Gastrocnemius medialis (tissue), 4 donors: ENCODE measurements at regions of chr4 and their contacts with region 1.

Region 1: DNA sequence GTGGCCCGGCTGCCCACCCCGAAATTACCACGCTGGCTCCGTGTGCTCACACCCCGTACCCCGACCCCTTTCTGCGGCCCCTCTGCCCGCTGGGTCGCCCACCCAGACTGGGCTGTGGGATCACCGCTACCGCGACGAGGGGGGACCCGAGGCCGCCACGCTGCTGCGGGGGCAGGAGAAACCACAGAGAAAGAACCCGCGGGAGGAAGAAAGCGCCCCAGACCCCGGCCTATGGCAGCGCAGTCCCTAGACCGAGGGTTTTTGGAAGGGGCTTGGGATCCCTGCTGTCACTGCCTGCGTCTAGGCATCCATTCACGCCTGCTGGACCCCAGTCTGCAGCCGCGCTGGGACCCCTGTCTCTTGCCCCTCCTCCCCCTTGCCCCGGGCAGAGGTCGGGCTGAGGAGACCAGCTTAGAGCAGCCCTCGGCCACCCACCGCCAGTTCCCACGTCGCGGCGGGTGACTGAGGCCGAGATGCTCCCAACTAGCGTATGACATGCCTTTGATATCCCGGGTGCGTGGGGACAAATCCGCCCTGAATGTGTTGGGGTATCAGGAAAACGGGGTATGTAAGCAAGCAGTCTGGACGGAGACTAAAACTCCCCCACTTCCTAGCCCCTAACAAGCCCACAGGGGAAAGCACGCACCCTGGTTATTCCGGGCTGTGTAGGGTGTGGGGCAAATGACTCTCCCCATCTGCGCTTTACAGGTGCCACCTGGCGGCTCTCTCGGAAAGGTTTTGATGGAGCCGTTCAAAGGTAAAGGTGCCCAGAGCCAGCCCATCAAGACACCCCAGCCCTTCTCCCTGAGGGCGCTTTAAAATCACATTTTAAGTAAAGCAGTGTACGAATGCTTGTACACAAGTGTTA is 862 bp upstream of the INPP4B start:
- DNase-seq: peak in 1 of 2 donors; percentile 23
- ATAC-seq: peak; percentile 39 to 50
- H3K4me3 ChIP-seq: peak overlapping the region; percentile 83 to 89 (median 84)
- H3K27ac ChIP-seq: peak overlapping the region; percentile 79 to 85 (median 84)
- H3K4me1 ChIP-seq: peaks cover 4 to 8% of the 10 kb centered on the region in 2 donors
- H3K27me3 ChIP-seq: no peaks in the 10 kb centered on the region
- CTCF ChIP-seq: peak in 4 of 5 experiments; percentile 11 to 36 (median 30)
- POLR2A ChIP-seq: no peak

Region 2: DNA sequence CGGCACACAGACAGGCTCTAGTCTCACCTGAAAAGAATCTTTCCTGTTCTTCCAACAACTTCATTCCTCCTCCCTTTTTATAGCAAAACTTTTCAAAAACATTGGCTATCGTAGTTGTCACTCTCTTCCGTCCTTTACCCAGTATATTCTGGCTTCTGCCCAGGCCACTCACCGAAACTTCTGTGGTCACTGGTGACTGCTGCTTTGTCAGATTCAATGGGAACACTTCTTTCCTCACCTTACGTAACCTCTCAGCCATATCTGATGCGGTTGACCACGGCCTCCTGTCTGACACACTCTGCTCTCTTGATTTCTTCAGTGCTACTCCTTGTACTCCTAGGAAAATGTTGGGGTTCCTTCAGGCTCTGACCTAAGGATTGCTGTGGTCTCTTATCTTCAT is 1704.5 kb before region 1 on chr4:
- in situ Hi-C with region 1: no loop called
- intact Hi-C with region 1: loop called (anchors 10 kb)
- DNase-seq: no peak
- ATAC-seq: peak in 1 of 2 donors; percentile 14
- H3K4me3 ChIP-seq: no peak overlapping the region
- H3K27ac ChIP-seq: no peak overlapping the region
- H3K4me1 ChIP-seq: no peaks in the 10 kb centered on the region
- H3K27me3 ChIP-seq: no peaks in the 10 kb centered on the region
- CTCF ChIP-seq: no peak
- POLR2A ChIP-seq: no peak

Region 3: GRCh38 chr4:142126890-142127497 is 720.0 kb before region 1 on chr4:
- in situ Hi-C with region 1: loop called (anchors 10 to 25 kb)
- intact Hi-C with region 1: loop called (anchors 2 kb)
- DNase-seq: peak; percentile 11 to 29
- ATAC-seq: peak; percentile 59 to 68
- H3K4me3 ChIP-seq: no peak overlapping the region
- H3K27ac ChIP-seq: no peak overlapping the region
- H3K4me1 ChIP-seq: no peaks in the 10 kb centered on the region
- H3K27me3 ChIP-seq: no peaks in the 10 kb centered on the region
- CTCF ChIP-seq: peak; percentile 54 to 88 (median 71)
- POLR2A ChIP-seq: no peak

Region 4: GRCh38 chr4:142282870-142283431 is 564.0 kb before region 1 on chr4:
- in situ Hi-C with region 1: no loop called
- intact Hi-C with region 1: loop called (anchors 5 kb)
- DNase-seq: no peak
- ATAC-seq: peak; percentile 36 to 44
- H3K4me3 ChIP-seq: no peak overlapping the region
- H3K27ac ChIP-seq: no peak overlapping the region
- H3K4me1 ChIP-seq: no peaks in the 10 kb centered on the region
- H3K27me3 ChIP-seq: no peaks in the 10 kb centered on the region
- CTCF ChIP-seq: peak; percentile 45 to 54 (median 51)
- POLR2A ChIP-seq: no peak

Region 5: GRCh38 chr4:142817442-142817841 is 29.5 kb before region 1 on chr4:
- in situ Hi-C with region 1: no loop called
- intact Hi-C with region 1: loop called (anchors 2 kb)
- DNase-seq: peak; percentile 22 to 28
- ATAC-seq: peak; percentile 94 to 98
- H3K4me3 ChIP-seq: peak overlapping the region in 1 of 4 donors; percentile 4
- H3K27ac ChIP-seq: peak overlapping the region in 2 of 4 donors; percentile 2 to 19
- H3K4me1 ChIP-seq: peaks cover 12 to 13% of the 10 kb centered on the region in 2 donors
- H3K27me3 ChIP-seq: no peaks in the 10 kb centered on the region
- CTCF ChIP-seq: no peak
- POLR2A ChIP-seq: no peak

Region 6: GRCh38 chr4:142832022-142832421 is 14.9 kb before region 1 on chr4:
- in situ Hi-C with region 1: no loop called
- intact Hi-C with region 1: no loop called
- DNase-seq: no peak
- ATAC-seq: no peak
- H3K4me3 ChIP-seq: no peak overlapping the region
- H3K27ac ChIP-seq: no peak overlapping the region
- H3K4me1 ChIP-seq: no peaks in the 10 kb centered on the region
- H3K27me3 ChIP-seq: no peaks in the 10 kb centered on the region
- CTCF ChIP-seq: no peak
- POLR2A ChIP-seq: no peak